Psoas muscle (tissue), 8 donors: ENCODE measurements at regions of chr20 and their contacts with region 1.

Region 1: GRCh38 chr20:17898548-17898994 is 70.0 kb downstream of the SNX5 start:
- DNase-seq: peak; percentile 54 to 66
- ATAC-seq: peak; percentile 74 to 79 (median 76)
- H3K4me3 ChIP-seq: no peak overlapping the region
- H3K27ac ChIP-seq: no peak overlapping the region
- H3K4me1 ChIP-seq: peaks cover 10% of the 10 kb centered on the region
- H3K27me3 ChIP-seq: no peaks in the 10 kb centered on the region
- CTCF ChIP-seq: peak; percentile 94

Region 2: GRCh38 chr20:17504898-17505635 is 393.5 kb before region 1 on chr20:
- intact Hi-C with region 1: loop called in 1 of 2 experiments (anchors 2 kb)
- DNase-seq: peak; percentile 49 to 68
- ATAC-seq: peak; percentile 68 to 89 (median 74)
- H3K4me3 ChIP-seq: peak overlapping the region; percentile 63
- H3K27ac ChIP-seq: no peak overlapping the region
- H3K4me1 ChIP-seq: no peaks in the 10 kb centered on the region
- H3K27me3 ChIP-seq: no peaks in the 10 kb centered on the region
- CTCF ChIP-seq: peak; percentile 74

Region 3: GRCh38 chr20:17682103-17682888 is 216.3 kb before region 1 on chr20 and contains the start of gene RRBP1:
- intact Hi-C with region 1: loop called (anchors 1 to 5 kb)
- DNase-seq: peak; percentile 99
- ATAC-seq: peak; percentile 95 to 96 (median 96)
- H3K4me3 ChIP-seq: peak within 1 kb of the TSS; percentile 75
- H3K27ac ChIP-seq: peak within 1 kb of the TSS; percentile 81
- H3K4me1 ChIP-seq: peaks cover 11% of the 10 kb centered on the region
- H3K27me3 ChIP-seq: no peaks in the 10 kb centered on the region
- CTCF ChIP-seq: peak; percentile 62
- total RNA-seq, gene RRBP1: 21.1 to 40.8 (median 22.6) TPM

Region 4: GRCh38 chr20:17794415-17794814 is 104.2 kb before region 1 on chr20:
- intact Hi-C with region 1: loop called in 1 of 2 experiments (anchors 5 kb)
- DNase-seq: peak in 1 of 2 donors; percentile 51
- ATAC-seq: no peak
- H3K4me3 ChIP-seq: no peak overlapping the region
- H3K27ac ChIP-seq: no peak overlapping the region
- H3K4me1 ChIP-seq: peaks cover 7% of the 10 kb centered on the region
- H3K27me3 ChIP-seq: no peaks in the 10 kb centered on the region
- CTCF ChIP-seq: no peak

Region 5: DNA sequence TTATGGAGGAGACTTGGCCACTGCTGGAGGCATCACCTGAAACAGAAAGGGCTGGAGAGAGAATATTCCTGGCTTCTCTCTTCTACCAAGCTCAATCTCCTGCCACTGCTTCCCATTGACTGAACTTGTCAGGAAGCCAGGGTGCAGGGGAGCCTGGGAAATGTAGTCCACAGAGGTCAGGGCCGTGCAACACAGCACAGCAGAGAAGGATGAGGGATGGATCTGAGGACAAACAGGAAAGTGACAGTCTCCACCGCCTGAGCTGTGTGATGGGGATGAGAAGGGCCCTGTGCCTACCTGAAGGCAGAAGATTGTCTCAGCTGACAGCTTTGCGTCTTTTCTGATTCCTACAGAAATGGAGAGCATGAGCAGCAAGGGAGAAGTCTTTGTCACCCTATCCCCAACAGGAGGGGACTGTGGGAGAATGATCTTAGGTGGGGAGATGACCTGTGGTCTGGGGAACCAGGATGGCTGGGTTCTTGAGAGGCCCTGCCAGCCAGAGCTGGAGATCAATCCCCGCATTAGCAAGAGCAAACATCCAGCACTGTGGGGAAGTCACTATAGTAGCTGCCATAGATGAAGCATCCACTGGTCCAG is 44.2 kb before region 1 on chr20:
- intact Hi-C with region 1: no loop called
- DNase-seq: peak in 1 of 2 donors; percentile 79
- ATAC-seq: peak in 3 of 4 donors; percentile 52 to 66 (median 57)
- H3K4me3 ChIP-seq: no peak overlapping the region
- H3K27ac ChIP-seq: no peak overlapping the region
- H3K4me1 ChIP-seq: peaks cover 3% of the 10 kb centered on the region
- H3K27me3 ChIP-seq: no peaks in the 10 kb centered on the region
- CTCF ChIP-seq: no peak

Region 6: GRCh38 chr20:17938871-17939619 is 40.5 kb after region 1 on chr20:
- intact Hi-C with region 1: loop called in 1 of 2 experiments (anchors 5 kb)
- DNase-seq: peak; percentile 60 to 80
- ATAC-seq: peak; percentile 77 to 88 (median 84)
- H3K4me3 ChIP-seq: no peak overlapping the region
- H3K27ac ChIP-seq: peak overlapping the region; percentile 38
- H3K4me1 ChIP-seq: peaks cover 27% of the 10 kb centered on the region
- H3K27me3 ChIP-seq: no peaks in the 10 kb centered on the region
- CTCF ChIP-seq: peak; percentile 90